CD8-positive, alpha-beta T cell (primary cell): ENCODE measurements at regions of chr5 and their contacts with region 1.

Region 1: DNA sequence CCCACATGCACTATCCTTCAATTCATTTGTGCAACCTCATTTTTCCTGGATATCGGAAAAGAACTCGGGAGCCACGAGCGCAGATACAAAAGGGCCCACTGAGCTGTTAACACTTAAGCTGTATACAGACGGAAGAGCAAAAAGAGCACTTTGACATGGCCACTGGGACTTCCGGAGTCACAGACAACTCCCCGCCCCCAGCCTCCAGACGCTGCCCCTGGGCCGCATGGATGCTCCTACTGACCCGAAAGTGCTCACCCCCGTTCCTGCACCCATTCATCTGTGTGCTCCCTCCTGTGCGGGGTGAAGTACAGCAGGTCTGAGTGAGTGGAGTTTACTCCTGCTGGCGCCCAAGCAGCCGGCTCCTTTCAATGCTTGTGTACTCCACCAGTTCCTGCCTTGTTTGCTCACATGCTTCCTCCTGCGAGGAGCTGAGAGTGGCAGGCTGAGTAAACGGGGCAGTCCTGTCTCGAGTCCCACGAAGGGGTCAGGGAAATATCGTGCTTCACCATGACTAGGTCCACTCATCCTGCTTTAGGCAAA is 901.0 kb upstream of the CTNND2 start:
- DNase-seq: no peak
- ATAC-seq: no peak
- H3K4me3 ChIP-seq: no peak overlapping the region
- H3K4me3 Mint-ChIP-seq: no peak overlapping the region
- H3K27ac ChIP-seq: no peak overlapping the region
- H3K27ac Mint-ChIP-seq: no peak overlapping the region
- H3K4me1 ChIP-seq: no peaks in the 10 kb centered on the region
- H3K4me1 Mint-ChIP-seq: no peaks in the 10 kb centered on the region
- H3K27me3 ChIP-seq: no peaks in the 10 kb centered on the region
- H3K27me3 Mint-ChIP-seq: no peaks in the 10 kb centered on the region
- CTCF ChIP-seq: no peak

Region 2: DNA sequence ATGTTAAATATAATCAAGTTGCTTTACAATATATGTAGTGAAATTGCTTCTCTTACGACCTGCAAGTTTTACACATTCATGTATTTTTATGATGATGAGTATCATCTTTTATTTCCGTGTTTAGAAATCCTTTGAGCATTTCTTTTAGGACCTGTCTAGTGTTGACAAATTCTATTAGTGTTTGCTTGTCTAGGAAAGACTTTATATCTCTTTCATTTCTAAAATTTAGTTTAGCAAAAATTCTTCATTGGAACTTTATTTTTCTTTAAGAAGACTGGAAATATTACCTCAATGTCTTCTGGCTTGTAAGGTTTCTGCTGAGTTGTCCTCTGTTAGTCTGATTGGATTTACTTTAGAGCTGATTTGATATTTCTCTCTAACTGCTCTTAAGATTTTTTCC is 19.9 kb after region 1 on chr5:
- CTCF ChIA-PET with region 1: no interaction called
- POLR2A ChIA-PET with region 1: no interaction called
- intact Hi-C with region 1: loop called (anchors 1 kb)
- DNase-seq: no peak
- ATAC-seq: no peak
- H3K4me3 ChIP-seq: no peak overlapping the region
- H3K4me3 Mint-ChIP-seq: no peak overlapping the region
- H3K27ac ChIP-seq: no peak overlapping the region
- H3K27ac Mint-ChIP-seq: no peak overlapping the region
- H3K4me1 ChIP-seq: no peaks in the 10 kb centered on the region
- H3K4me1 Mint-ChIP-seq: no peaks in the 10 kb centered on the region
- H3K27me3 ChIP-seq: no peaks in the 10 kb centered on the region
- H3K27me3 Mint-ChIP-seq: no peaks in the 10 kb centered on the region
- CTCF ChIP-seq: no peak

Region 3: GRCh38 chr5:12901696-12902095 is 96.5 kb after region 1 on chr5:
- CTCF ChIA-PET with region 1: no interaction called
- POLR2A ChIA-PET with region 1: no interaction called
- intact Hi-C with region 1: no loop called
- DNase-seq: no peak
- ATAC-seq: no peak
- H3K4me3 ChIP-seq: no peak overlapping the region
- H3K4me3 Mint-ChIP-seq: no peak overlapping the region
- H3K27ac ChIP-seq: no peak overlapping the region
- H3K27ac Mint-ChIP-seq: no peak overlapping the region
- H3K4me1 ChIP-seq: no peaks in the 10 kb centered on the region
- H3K4me1 Mint-ChIP-seq: no peaks in the 10 kb centered on the region
- H3K27me3 ChIP-seq: no peaks in the 10 kb centered on the region
- H3K27me3 Mint-ChIP-seq: no peaks in the 10 kb centered on the region
- CTCF ChIP-seq: no peak